GM12878 (cell line): ENCODE measurements at regions of chr5 and their contacts with region 1.

Region 1: DNA sequence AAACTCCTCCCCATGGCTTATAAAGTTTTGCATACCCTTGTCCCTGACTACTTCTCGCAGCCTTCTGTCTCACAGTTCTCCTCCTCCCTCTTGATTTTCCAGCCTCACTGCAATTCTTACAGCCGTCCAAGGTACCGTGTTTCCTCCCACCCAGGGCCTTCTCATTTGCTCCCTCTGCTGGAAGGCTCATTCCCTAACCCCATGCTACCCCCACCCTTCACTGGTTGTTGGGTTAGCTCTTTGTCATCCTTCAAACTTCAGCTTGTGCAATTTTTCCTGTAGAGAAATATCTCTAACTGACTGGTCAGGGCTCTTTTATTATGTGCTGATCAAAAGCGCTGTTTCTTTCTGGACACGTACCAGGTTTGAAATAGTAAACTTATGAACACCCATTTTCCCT is 329.2 kb downstream of the EBF1 start:
- DNase-seq: no peak
- ATAC-seq: no peak
- H3K4me3 ChIP-seq: no peak overlapping the region
- H3K27ac ChIP-seq: no peak overlapping the region
- H3K4me1 ChIP-seq: peaks cover 4% of the 10 kb centered on the region; the same call in 1 of the 2 replicates
- H3K27me3 ChIP-seq: no peaks in the 10 kb centered on the region
- CTCF ChIP-seq: peak in 2 of 3 experiments; percentile 17 to 38; a peak in 2 of 6 replicates
- EP300 ChIP-seq: no peak
- POLR2A ChIP-seq: no peak
- RAD21 ChIP-seq: 0 out of 2 replicates have a peak, but pooled peaks have one; percentile 15

Region 2: DNA sequence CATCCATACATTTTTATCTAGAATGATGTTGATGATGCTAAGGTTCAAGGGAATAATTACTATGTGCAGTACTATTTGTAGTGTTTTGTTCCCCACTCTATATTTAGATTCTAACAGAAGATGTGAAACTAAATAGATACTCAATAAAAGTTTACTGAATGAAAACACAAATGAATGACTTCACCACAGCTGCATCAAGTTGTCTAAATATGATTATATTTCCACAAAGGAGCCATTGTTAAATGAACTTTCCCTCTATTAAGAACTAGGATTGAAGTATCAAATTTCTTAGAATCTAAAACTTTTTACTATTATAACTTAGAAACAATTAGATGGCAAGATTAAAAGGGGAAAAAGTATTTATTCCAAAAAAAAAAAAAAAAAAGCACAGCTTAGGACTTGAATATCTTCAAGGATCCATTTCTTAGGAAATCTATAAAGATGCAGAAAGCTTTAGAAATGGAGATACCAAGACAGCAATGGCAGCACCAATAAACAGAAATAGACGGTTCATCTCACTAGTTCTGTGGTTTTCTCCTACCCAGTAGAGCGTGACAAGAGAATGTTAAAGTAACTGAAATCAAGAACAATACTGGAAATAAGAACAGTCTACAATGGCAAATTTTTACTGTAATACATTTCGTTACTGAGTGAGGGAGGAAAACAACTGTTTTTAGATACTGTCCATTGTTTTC is 18.4 kb before region 1 on chr5:
- CTCF ChIA-PET with region 1: interaction called, 6 read pairs
- POLR2A ChIA-PET with region 1: no interaction called
- RAD21 ChIA-PET with region 1: interaction called, 6 read pairs
- SMC1A ChIA-PET with region 1: interaction called, 17 read pairs
- in situ Hi-C with region 1: no loop called
- intact Hi-C with region 1: no loop called
- DNase-seq: peak; percentile 79
- ATAC-seq: peak; percentile 96
- H3K4me3 ChIP-seq: peak overlapping the region; percentile 0; the same call in 1 of the 2 replicates
- H3K27ac ChIP-seq: no peak overlapping the region
- H3K4me1 ChIP-seq: peaks cover 15% of the 10 kb centered on the region; the same call in 1 of the 2 replicates
- H3K27me3 ChIP-seq: no peaks in the 10 kb centered on the region
- CTCF ChIP-seq: no peak
- EP300 ChIP-seq: peak in 1 of 2 experiments; percentile 20; a peak in 1 of 4 replicates
- POLR2A ChIP-seq: no peak
- RAD21 ChIP-seq: no peak

Region 3: GRCh38 chr5:158786390-158786789 is 15.9 kb after region 1 on chr5:
- CTCF ChIA-PET with region 1: interaction called, 7 read pairs
- POLR2A ChIA-PET with region 1: interaction called, 3 read pairs
- RAD21 ChIA-PET with region 1: interaction called, 5 read pairs
- SMC1A ChIA-PET with region 1: interaction called, 28 read pairs
- in situ Hi-C with region 1: no loop called
- intact Hi-C with region 1: no loop called
- DNase-seq: no peak
- ATAC-seq: no peak
- H3K4me3 ChIP-seq: no peak overlapping the region
- H3K27ac ChIP-seq: no peak overlapping the region
- H3K4me1 ChIP-seq: peaks cover 1% of the 10 kb centered on the region; the same call in 1 of the 2 replicates
- H3K27me3 ChIP-seq: no peaks in the 10 kb centered on the region
- CTCF ChIP-seq: no peak
- EP300 ChIP-seq: no peak
- POLR2A ChIP-seq: no peak
- RAD21 ChIP-seq: no peak

Region 4: DNA sequence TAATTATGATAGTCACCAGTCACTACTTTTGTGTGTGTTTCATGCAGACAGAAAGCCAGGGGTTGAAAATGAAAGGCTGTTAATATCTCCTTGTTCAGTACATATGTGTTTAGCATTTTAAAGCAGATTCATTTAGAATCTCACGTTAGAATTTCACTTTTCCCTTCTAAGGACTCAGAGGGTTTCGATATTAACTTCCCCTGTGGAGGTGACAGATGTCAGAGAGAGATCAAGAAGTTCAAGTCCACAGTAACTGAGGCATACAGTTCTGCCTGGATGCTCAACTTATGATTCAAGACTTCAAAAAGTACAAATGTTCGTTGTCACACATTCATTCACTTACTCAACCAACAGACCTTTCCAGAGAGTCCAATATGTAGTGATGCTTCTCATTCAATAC is 78.1 kb after region 1 on chr5:
- CTCF ChIA-PET with region 1: no interaction called
- POLR2A ChIA-PET with region 1: interaction called, 3 read pairs
- RAD21 ChIA-PET with region 1: interaction called, 9 read pairs
- SMC1A ChIA-PET with region 1: interaction called, 11 read pairs
- in situ Hi-C with region 1: no loop called
- intact Hi-C with region 1: no loop called
- DNase-seq: peak; percentile 80
- ATAC-seq: peak; percentile 79
- H3K4me3 ChIP-seq: no peak overlapping the region
- H3K27ac ChIP-seq: peak overlapping the region; percentile 68
- H3K4me1 ChIP-seq: peaks cover 31% of the 10 kb centered on the region
- H3K27me3 ChIP-seq: no peaks in the 10 kb centered on the region
- CTCF ChIP-seq: no peak
- EP300 ChIP-seq: peak; percentile 16 to 30; a peak in 1 of 4 replicates
- POLR2A ChIP-seq: no peak
- RAD21 ChIP-seq: no peak

Region 5: DNA sequence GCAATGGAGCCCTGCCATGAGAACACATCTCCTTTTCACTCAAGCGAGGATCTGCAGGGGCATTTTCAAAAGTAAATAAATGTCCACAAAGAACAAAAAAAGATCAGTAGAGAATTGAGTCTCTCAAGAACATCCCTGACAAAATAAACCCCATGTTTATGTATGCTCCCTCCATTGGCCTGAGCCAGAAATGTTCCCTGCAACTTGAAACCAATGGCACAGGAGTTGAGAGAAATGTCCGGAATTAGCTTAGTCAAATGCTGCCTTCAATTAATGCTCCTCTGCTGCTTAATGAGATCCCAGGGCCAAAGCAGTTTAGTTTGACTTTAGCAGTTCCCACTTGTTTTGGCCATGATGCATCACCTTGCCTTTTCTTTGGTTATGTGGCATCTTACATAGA is 90.9 kb after region 1 on chr5:
- CTCF ChIA-PET with region 1: no interaction called
- POLR2A ChIA-PET with region 1: no interaction called
- RAD21 ChIA-PET with region 1: no interaction called
- SMC1A ChIA-PET with region 1: no interaction called
- in situ Hi-C with region 1: no loop called
- intact Hi-C with region 1: no loop called
- DNase-seq: no peak
- ATAC-seq: no peak
- H3K4me3 ChIP-seq: no peak overlapping the region
- H3K27ac ChIP-seq: no peak overlapping the region
- H3K4me1 ChIP-seq: no peaks in the 10 kb centered on the region
- H3K27me3 ChIP-seq: no peaks in the 10 kb centered on the region
- CTCF ChIP-seq: no peak
- EP300 ChIP-seq: no peak
- POLR2A ChIP-seq: no peak
- RAD21 ChIP-seq: no peak